ENCODE measurements at regions of chr5 and their contacts with region 1.

Region 1: GRCh38 chr5:34486160-34486848 is 169.8 kb upstream of the RAI14 start:
- DNase-seq: peak; percentile 15 to 73 (median 62)
- ATAC-seq: no peak
- H3K4me3 ChIP-seq: no peak overlapping the region
- H3K4me3 Mint-ChIP-seq: no peak overlapping the region
- H3K27ac ChIP-seq: no peak overlapping the region
- H3K27ac Mint-ChIP-seq: no peak overlapping the region
- H3K4me1 ChIP-seq: peaks cover 3% of the 10 kb centered on the region
- H3K4me1 Mint-ChIP-seq: peaks cover 2% of the 10 kb centered on the region
- H3K27me3 ChIP-seq: no peaks in the 10 kb centered on the region
- H3K27me3 Mint-ChIP-seq: peaks cover 25% of the 10 kb centered on the region
- CTCF ChIP-seq: peak; percentile 82

Region 2: DNA sequence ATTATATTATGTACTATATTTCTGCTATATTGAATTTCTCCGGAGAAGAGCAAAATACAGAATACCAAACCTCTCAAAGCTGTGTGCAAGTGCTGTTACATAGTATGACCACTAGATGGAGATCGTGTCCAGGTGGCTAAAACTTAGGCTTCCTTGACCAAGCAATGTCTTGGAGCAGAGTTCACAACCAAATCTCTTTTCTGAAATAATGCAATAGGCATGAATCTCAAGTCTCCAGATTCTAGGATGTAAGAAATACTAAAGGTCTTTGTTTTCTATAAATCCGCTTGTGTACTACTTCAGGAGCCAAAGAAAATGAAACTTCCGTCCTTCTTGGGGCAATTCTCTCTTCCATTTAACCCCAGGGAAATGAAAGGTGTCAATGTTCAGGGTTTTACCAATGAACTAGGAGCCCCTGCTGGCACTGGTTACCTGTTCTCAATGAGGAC is 11.7 kb before region 1 on chr5:
- CTCF ChIA-PET with region 1: interaction called, 58 read pairs
- POLR2A ChIA-PET with region 1: no interaction called
- intact Hi-C with region 1: no loop called
- DNase-seq: peak in 2 of 9 experiments; percentile 48 to 57
- ATAC-seq: peak; percentile 62
- H3K4me3 ChIP-seq: no peak overlapping the region
- H3K4me3 Mint-ChIP-seq: no peak overlapping the region
- H3K27ac ChIP-seq: no peak overlapping the region
- H3K27ac Mint-ChIP-seq: no peak overlapping the region
- H3K4me1 ChIP-seq: no peaks in the 10 kb centered on the region
- H3K4me1 Mint-ChIP-seq: peaks cover 3% of the 10 kb centered on the region
- H3K27me3 ChIP-seq: no peaks in the 10 kb centered on the region
- H3K27me3 Mint-ChIP-seq: peaks cover 15% of the 10 kb centered on the region
- CTCF ChIP-seq: peak; percentile 97

Region 3: DNA sequence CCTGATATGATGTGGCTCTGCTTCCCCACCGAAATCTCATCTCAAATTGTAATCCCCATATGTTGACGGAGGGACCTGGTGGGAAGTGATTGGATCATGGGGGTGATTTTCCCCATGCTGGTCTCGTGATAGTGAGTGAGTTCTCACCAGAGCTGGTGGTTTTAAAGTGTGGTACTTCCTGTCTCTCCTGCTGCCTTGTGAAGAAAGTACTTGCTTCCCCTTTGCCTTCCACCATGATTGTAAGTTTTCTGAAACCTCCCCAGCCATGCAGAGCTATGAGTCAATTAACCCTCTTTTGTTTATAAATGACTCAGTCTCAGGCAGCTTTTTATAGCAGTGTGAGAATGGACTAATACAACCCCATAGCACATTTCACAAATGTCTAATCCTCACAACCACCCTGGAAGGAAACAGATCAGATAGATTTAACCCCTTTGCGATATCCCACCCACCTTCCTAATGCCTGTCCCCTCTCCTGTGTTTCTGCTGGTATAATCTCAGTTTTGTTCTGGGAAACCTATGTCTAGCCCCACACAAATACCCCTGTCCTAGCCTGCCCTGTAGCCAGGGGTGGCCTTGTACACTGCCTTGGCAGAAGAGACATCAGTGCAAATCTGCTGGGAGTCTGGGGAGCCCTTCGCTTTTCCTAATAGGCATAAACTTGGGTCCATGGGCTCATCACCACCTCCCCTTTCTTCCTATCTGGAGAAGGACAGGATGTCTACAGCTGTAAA is 12.9 kb after region 1 on chr5:
- CTCF ChIA-PET with region 1: interaction called, 13 read pairs
- POLR2A ChIA-PET with region 1: no interaction called
- intact Hi-C with region 1: no loop called
- DNase-seq: peak in 4 of 9 experiments; percentile 11 to 59 (median 24)
- ATAC-seq: no peak
- H3K4me3 ChIP-seq: no peak overlapping the region
- H3K4me3 Mint-ChIP-seq: no peak overlapping the region
- H3K27ac ChIP-seq: peak overlapping the region in 1 of 2 experiments; percentile 59
- H3K27ac Mint-ChIP-seq: no peak overlapping the region
- H3K4me1 ChIP-seq: no peaks in the 10 kb centered on the region
- H3K4me1 Mint-ChIP-seq: peaks cover 6% of the 10 kb centered on the region
- H3K27me3 ChIP-seq: no peaks in the 10 kb centered on the region
- H3K27me3 Mint-ChIP-seq: peaks cover 9% of the 10 kb centered on the region
- CTCF ChIP-seq: no peak

Region 4: DNA sequence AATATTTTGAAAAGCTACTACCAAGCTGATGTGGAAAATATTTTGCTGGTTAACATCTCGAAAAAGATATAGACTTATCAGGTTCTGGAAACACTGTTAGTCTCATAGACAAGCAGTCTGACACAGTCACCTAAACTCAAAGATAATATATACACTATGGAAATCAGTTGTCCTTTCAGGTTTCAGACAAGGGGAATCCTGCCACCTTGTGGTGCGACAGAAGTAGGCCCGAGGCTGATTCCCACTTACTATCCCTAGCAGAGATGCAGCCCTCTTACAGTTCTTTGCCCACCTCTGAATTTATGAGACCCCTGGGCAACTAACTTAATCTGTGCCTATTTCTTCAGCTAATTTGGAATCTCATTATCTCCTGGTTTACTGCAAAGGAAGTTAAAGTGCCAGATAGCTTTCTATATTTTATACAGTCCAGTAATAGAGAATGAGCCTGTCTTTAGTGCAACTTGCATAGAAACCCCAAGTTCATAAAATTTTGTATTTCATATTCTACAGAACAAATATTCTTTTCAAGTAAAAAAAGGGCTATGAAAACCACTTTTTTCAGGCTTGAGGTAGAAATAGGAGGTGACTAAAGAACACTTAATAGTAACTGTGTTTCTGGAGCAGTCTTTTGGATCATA is 412.1 kb after region 1 on chr5:
- CTCF ChIA-PET with region 1: interaction called, 24 read pairs
- POLR2A ChIA-PET with region 1: no interaction called
- intact Hi-C with region 1: loop called (anchors 1 kb)
- DNase-seq: peak; percentile 8 to 72 (median 60)
- ATAC-seq: peak; percentile 67
- H3K4me3 ChIP-seq: no peak overlapping the region
- H3K4me3 Mint-ChIP-seq: no peak overlapping the region
- H3K27ac ChIP-seq: no peak overlapping the region
- H3K27ac Mint-ChIP-seq: no peak overlapping the region
- H3K4me1 ChIP-seq: no peaks in the 10 kb centered on the region
- H3K4me1 Mint-ChIP-seq: no peaks in the 10 kb centered on the region
- H3K27me3 ChIP-seq: no peaks in the 10 kb centered on the region
- H3K27me3 Mint-ChIP-seq: no peaks in the 10 kb centered on the region
- CTCF ChIP-seq: peak; percentile 83

Region 5: DNA sequence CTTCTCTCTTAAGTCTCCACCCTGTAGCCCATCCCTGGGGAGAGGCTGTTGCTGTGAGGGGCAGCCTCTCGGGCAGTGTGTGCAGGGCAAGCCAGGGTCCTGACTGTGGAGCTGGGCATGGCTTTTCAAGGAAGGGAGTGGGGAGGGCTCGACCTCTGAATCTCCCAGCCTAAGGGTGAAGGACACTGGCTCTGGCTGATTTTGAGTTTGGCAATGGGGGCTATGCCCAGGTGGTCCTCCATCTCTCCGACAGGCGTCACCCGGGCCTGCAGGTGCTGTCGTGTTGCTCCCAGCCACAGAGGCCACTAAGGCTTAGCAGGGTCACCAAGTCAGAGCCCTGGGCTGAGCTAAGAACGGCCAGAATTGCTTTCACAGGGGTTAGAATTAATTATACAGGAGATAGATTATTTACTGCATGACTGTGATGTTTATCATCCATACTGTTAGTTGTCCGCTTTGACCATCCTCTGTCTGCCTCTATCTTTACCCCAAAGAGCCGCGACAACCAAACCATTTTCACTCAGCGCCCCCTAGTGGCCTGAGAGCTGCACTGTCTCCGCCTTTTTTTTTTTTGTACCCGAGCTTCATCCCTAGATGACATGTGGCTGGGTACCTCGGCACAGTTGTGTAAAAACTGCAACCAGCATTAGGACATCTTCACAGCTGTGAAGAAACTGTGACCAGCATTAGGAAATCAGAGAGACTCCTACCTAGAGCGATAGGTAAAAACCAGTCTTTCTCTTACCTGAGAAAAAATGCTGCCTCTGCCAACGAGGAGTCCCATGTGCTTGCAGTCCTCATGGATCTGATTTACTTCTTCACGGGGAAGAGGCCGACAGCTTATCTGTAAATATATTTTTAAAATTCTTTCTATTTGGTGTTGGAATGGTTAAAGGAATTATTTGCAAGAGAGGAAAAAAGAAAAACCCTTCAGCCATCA is 517.0 kb after region 1 on chr5:
- CTCF ChIA-PET with region 1: no interaction called
- POLR2A ChIA-PET with region 1: no interaction called
- intact Hi-C with region 1: loop called (anchors 1 to 5 kb)
- DNase-seq: peak in 8 of 9 experiments; percentile 4 to 68 (median 50)
- ATAC-seq: no peak
- H3K4me3 ChIP-seq: no peak overlapping the region
- H3K4me3 Mint-ChIP-seq: no peak overlapping the region
- H3K27ac ChIP-seq: no peak overlapping the region
- H3K27ac Mint-ChIP-seq: no peak overlapping the region
- H3K4me1 ChIP-seq: no peaks in the 10 kb centered on the region
- H3K4me1 Mint-ChIP-seq: no peaks in the 10 kb centered on the region
- H3K27me3 ChIP-seq: no peaks in the 10 kb centered on the region
- H3K27me3 Mint-ChIP-seq: peaks cover 33% of the 10 kb centered on the region
- CTCF ChIP-seq: peak; percentile 76

Measured in CD8-positive, alpha-beta T cell (primary cell).